MCF 10A (cell line): ENCODE measurements at regions of chr2 and their contacts with region 1.

Region 1: DNA sequence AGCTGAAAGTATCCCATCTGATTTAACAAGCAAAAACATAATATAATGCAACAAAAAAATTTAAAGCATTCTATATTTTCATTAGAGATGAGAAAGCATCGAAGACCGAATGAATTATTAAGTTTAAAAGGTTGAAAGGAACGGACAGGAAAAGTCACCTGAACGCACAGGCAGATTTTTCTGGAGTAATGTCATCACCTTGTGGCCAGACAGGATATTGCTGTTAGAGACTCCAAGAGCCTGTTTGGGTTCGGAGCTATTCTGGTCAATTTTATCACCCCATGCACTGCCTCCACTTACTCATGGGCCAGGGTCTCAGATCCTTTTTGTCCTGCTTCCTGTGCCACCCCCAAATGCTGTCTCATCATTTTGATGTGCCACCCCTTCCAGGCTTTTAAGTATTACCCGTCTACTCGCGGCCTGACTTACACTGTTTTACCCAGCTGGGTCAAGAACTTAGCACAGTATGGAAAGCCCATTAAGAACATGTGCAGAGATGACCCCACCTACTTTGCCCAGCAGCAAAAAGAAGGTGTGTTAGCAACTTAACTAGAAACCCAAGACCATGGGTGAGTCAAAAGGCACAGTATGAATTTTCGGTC is 27.3 kb downstream of the GKN2 start:
- DNase-seq: peak; percentile 73
- H3K4me3 Mint-ChIP-seq: no peak overlapping the region
- H3K27ac Mint-ChIP-seq: no peak overlapping the region
- H3K4me1 Mint-ChIP-seq: peaks cover 5% of the 10 kb centered on the region
- H3K27me3 Mint-ChIP-seq: no peaks in the 10 kb centered on the region
- CTCF ChIP-seq: peak; percentile 93

Region 2: DNA sequence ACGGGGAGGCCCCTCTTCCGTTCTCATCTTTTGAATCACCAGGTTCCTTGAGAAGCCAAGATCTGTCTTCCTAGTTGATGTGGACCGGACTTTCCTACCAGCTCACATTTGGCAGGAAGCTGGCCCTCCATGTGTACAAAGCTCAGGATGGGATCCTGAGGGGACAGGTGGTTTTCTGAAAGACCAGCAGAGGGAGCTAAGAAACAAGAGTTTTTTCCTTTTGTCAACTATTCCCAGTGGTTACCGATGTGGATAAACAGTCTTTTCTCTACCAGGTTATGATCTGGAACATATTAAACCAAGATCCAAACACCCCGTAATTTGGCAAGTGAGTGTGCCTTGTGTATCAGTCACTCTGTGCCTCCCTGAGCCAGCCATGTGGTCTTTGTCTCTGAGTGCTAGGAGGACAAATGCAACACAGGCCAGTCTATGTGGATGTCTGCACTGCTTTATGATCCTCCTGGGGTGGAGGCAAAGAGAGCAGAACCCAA is 215.9 kb before region 1 on chr2:
- CTCF ChIA-PET with region 1: interaction called, 139 read pairs
- POLR2A ChIA-PET with region 1: interaction called, 8 read pairs
- intact Hi-C with region 1: loop called (anchors 1 kb)
- DNase-seq: peak; percentile 60
- H3K4me3 Mint-ChIP-seq: no peak overlapping the region
- H3K27ac Mint-ChIP-seq: no peak overlapping the region
- H3K4me1 Mint-ChIP-seq: no peaks in the 10 kb centered on the region
- H3K27me3 Mint-ChIP-seq: peaks cover 43% of the 10 kb centered on the region
- CTCF ChIP-seq: peak; percentile 66

Region 3: DNA sequence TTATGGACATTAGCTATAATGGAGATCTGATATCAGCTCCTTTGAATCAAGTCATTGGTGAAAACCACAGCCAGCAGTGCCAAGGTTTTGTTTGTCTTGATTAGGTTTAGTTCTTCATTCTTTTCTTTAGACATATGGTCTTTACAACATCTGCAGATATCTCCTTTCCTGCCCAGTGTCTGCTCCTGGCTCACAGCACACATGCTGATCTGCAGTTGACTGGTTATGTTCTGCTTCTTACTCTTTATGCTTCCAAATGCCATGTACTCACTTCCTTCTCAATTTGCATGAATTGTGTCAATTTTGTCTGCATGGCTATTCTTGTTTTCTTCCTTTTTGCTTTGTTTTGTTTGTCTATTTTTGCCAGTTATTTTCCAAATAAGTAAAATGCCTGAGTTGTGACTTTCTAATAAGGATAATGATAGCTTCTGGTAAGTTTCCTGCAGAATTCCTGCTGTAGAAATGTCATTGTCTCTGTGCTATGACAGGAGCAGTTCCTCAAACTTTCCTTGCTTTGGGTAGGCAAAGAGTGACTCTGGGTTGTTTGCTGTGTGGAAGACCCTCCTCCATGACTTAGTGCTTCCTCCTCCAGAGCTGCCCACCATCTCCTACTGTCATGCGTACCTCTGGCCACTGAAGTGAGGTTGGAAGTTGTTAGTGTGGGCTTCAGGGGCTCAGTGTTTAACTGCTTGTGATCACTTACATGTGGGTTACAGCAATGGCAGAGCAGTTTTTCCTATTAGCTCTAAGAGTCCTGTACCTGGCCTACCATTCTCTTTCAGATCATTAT is 182.6 kb before region 1 on chr2:
- CTCF ChIA-PET with region 1: interaction called, 32 read pairs
- POLR2A ChIA-PET with region 1: no interaction called
- intact Hi-C with region 1: no loop called
- DNase-seq: no peak
- H3K4me3 Mint-ChIP-seq: no peak overlapping the region
- H3K27ac Mint-ChIP-seq: no peak overlapping the region
- H3K4me1 Mint-ChIP-seq: peaks cover 23% of the 10 kb centered on the region
- H3K27me3 Mint-ChIP-seq: no peaks in the 10 kb centered on the region
- CTCF ChIP-seq: no peak

Region 4: GRCh38 chr2:68909793-68910674 is 15.4 kb before region 1 on chr2:
- CTCF ChIA-PET with region 1: interaction called, 34 read pairs
- POLR2A ChIA-PET with region 1: interaction called, 4 read pairs
- intact Hi-C with region 1: no loop called
- DNase-seq: peak; percentile 84
- H3K4me3 Mint-ChIP-seq: no peak overlapping the region
- H3K27ac Mint-ChIP-seq: no peak overlapping the region
- H3K4me1 Mint-ChIP-seq: peaks cover 18% of the 10 kb centered on the region
- H3K27me3 Mint-ChIP-seq: no peaks in the 10 kb centered on the region
- CTCF ChIP-seq: peak; percentile 89

Region 5: GRCh38 chr2:68943581-68944568 is 18.5 kb after region 1 on chr2:
- CTCF ChIA-PET with region 1: interaction called, 16 read pairs
- POLR2A ChIA-PET with region 1: interaction called, 3 read pairs
- intact Hi-C with region 1: no loop called
- DNase-seq: peak; percentile 79
- H3K4me3 Mint-ChIP-seq: no peak overlapping the region
- H3K27ac Mint-ChIP-seq: no peak overlapping the region
- H3K4me1 Mint-ChIP-seq: no peaks in the 10 kb centered on the region
- H3K27me3 Mint-ChIP-seq: no peaks in the 10 kb centered on the region
- CTCF ChIP-seq: peak; percentile 72